ENCODE measurements at regions of chr19 and their contacts with region 1.

Region 1: DNA sequence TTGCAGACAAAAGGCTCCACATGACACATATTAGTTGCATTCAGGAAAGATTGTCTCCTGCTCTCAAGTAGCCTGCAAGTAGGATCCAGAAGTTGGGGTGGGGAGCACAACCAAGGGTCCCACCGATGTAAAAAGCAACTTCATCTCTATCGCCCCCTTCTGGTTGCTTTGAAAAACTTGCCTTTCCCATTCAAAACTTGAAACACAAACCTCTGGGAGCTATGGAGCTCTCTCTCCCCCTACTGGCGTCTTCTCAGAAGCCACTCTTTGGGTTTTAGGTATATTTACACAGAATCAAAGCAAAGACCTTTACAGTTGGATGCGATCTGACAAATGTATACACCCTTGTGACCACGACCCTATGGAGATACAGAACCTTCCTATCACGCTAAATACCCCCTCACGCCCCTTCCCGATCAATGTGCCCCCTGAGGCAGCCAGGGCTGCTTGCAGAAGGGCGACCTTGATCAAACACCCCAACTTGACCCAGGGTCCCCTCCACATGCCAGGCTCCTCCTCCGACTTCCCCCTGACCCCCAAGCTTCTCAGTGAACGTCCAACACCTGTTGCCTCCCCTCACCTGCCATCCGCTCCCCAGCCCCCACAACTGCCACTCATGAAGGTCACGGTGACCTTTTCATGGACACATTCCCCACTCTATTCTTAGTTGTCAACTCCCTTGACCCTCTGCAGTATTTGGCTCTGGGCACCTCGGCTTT is 10.1 kb downstream of the NOSIP start:
- DNase-seq: peak in 8 of 9 experiments; percentile 54 to 94 (median 74)
- ATAC-seq: peak; percentile 36
- H3K4me3 ChIP-seq: no peak overlapping the region
- H3K4me3 Mint-ChIP-seq: peak overlapping the region; percentile 68
- H3K27ac ChIP-seq: no peak overlapping the region
- H3K27ac Mint-ChIP-seq: peak overlapping the region; percentile 89
- H3K4me1 ChIP-seq: peaks cover 59% of the 10 kb centered on the region
- H3K4me1 Mint-ChIP-seq: peaks cover 49% of the 10 kb centered on the region
- H3K27me3 ChIP-seq: no peaks in the 10 kb centered on the region
- H3K27me3 Mint-ChIP-seq: no peaks in the 10 kb centered on the region
- CTCF ChIP-seq: peak; percentile 100

Region 2: GRCh38 chr19:49224856-49225255 is 345.4 kb before region 1 on chr19:
- CTCF ChIA-PET with region 1: no interaction called
- POLR2A ChIA-PET with region 1: no interaction called
- intact Hi-C with region 1: loop called in 1 of 2 experiments (anchors 1 kb)
- DNase-seq: peak in 2 of 9 experiments; percentile 26 to 28
- ATAC-seq: no peak
- H3K4me3 ChIP-seq: no peak overlapping the region
- H3K4me3 Mint-ChIP-seq: no peak overlapping the region
- H3K27ac ChIP-seq: no peak overlapping the region
- H3K27ac Mint-ChIP-seq: no peak overlapping the region
- H3K4me1 ChIP-seq: peaks cover 8% of the 10 kb centered on the region
- H3K4me1 Mint-ChIP-seq: peaks cover 4% of the 10 kb centered on the region
- H3K27me3 ChIP-seq: no peaks in the 10 kb centered on the region
- H3K27me3 Mint-ChIP-seq: peaks cover 12% of the 10 kb centered on the region
- CTCF ChIP-seq: no peak

Region 3: DNA sequence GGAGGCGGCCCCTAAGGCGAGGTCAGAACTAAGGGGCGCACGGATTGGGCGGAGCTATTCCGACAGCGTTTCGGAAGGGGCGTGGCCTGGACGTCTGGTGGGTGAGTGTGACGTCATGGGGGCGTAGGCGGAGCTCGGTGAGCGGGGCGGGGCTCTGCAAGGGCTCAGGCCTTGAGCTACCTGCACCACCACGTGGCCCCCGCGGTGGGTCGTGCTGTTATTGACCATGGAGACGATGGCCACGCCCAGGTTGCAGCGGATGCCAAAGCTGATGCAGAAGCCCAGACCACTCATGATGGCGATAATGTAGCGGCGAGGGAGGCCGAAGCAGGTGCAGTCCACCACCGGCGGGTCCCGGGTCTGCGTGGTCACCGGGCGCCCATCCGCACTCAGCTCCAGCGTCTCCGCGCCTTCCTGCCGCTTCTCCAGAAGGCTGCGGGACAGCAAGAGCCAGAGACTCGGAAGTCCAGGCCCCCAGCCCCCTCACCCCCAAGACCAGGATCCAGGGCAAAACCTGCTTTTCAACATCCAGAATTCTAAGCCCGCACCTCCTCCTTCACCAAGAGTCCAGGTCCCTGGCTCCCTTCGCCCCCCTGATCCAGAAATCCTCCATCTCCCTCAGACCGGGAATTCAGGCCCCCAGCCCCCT is 133.8 kb before region 1 on chr19:
- CTCF ChIA-PET with region 1: no interaction called
- POLR2A ChIA-PET with region 1: no interaction called
- intact Hi-C with region 1: no loop called
- DNase-seq: peak in 5 of 9 experiments; percentile 47 to 76 (median 67)
- ATAC-seq: peak; percentile 58
- H3K4me3 ChIP-seq: no peak overlapping the region
- H3K4me3 Mint-ChIP-seq: no peak overlapping the region
- H3K27ac ChIP-seq: no peak overlapping the region
- H3K27ac Mint-ChIP-seq: no peak overlapping the region
- H3K4me1 ChIP-seq: peaks cover 30% of the 10 kb centered on the region
- H3K4me1 Mint-ChIP-seq: peaks cover 32% of the 10 kb centered on the region
- H3K27me3 ChIP-seq: peaks cover 78 to 86% of the 10 kb centered on the region in 2 experiments
- H3K27me3 Mint-ChIP-seq: peaks cover 78% of the 10 kb centered on the region
- CTCF ChIP-seq: no peak

Region 4: DNA sequence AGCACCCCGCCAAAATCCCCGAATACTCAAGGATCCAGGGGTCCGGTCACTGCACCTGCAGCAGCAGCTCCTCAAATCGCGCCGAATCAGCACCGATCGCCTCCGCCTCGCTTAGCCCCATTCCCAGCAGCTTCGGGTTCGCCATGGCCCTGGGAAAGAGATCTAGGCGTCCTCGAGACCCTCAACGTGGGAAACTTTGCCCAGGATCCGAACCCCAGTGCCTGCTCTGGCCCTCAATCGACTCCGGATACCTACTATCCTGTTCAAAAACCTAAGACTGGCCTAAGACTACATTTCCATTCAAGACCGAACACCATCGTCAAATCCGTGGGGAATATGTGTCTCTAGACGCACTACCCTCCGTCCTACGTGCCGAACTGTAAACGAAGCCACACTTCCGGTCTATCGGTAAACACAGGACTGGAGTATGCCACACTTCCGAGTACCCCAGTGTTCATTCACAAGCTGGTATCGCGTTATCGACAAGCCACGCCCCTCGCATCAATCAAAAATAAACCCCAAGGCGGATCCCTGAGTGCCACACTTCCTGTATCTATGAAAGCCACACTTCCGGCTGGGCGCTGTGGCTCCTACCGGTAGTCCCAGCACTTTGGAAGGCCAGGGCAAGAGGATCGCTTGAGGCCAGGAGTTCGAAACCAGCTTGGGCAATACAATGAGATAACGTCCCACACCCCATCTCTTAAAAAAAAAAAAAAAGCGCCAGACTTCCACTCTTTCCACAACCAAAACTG is 118.7 kb before region 1 on chr19 and contains the start of gene PIH1D1:
- CTCF ChIA-PET with region 1: no interaction called
- POLR2A ChIA-PET with region 1: no interaction called
- intact Hi-C with region 1: loop called in 1 of 2 experiments (anchors 1 kb)
- DNase-seq: peak; percentile 86 to 99 (median 94)
- ATAC-seq: peak; percentile 66
- H3K4me3 ChIP-seq: peak within 1 kb of the TSS; percentile 87 to 94
- H3K4me3 Mint-ChIP-seq: peak within 1 kb of the TSS; percentile 99
- H3K27ac ChIP-seq: peak within 1 kb of the TSS; percentile 89 to 96
- H3K27ac Mint-ChIP-seq: peak within 1 kb of the TSS; percentile 99
- H3K4me1 ChIP-seq: peaks cover 31% of the 10 kb centered on the region
- H3K4me1 Mint-ChIP-seq: peaks cover 50% of the 10 kb centered on the region
- H3K27me3 ChIP-seq: no peaks in the 10 kb centered on the region
- H3K27me3 Mint-ChIP-seq: no peaks in the 10 kb centered on the region
- CTCF ChIP-seq: no peak
- total RNA-seq, gene PIH1D1: 113 to 119 TPM

Region 5: GRCh38 chr19:49502866-49503581 is 67.3 kb before region 1 on chr19:
- CTCF ChIA-PET with region 1: interaction called, 27 read pairs
- POLR2A ChIA-PET with region 1: interaction called, 8 read pairs
- intact Hi-C with region 1: loop called (anchors 1 kb)
- DNase-seq: peak in 6 of 9 experiments; percentile 43 to 80 (median 58)
- ATAC-seq: no peak
- H3K4me3 ChIP-seq: no peak overlapping the region
- H3K4me3 Mint-ChIP-seq: no peak overlapping the region
- H3K27ac ChIP-seq: peak overlapping the region in 1 of 2 experiments; percentile 98
- H3K27ac Mint-ChIP-seq: peak overlapping the region; percentile 75
- H3K4me1 ChIP-seq: peaks cover 42% of the 10 kb centered on the region
- H3K4me1 Mint-ChIP-seq: peaks cover 40% of the 10 kb centered on the region
- H3K27me3 ChIP-seq: no peaks in the 10 kb centered on the region
- H3K27me3 Mint-ChIP-seq: no peaks in the 10 kb centered on the region
- CTCF ChIP-seq: peak; percentile 67

Region 6: DNA sequence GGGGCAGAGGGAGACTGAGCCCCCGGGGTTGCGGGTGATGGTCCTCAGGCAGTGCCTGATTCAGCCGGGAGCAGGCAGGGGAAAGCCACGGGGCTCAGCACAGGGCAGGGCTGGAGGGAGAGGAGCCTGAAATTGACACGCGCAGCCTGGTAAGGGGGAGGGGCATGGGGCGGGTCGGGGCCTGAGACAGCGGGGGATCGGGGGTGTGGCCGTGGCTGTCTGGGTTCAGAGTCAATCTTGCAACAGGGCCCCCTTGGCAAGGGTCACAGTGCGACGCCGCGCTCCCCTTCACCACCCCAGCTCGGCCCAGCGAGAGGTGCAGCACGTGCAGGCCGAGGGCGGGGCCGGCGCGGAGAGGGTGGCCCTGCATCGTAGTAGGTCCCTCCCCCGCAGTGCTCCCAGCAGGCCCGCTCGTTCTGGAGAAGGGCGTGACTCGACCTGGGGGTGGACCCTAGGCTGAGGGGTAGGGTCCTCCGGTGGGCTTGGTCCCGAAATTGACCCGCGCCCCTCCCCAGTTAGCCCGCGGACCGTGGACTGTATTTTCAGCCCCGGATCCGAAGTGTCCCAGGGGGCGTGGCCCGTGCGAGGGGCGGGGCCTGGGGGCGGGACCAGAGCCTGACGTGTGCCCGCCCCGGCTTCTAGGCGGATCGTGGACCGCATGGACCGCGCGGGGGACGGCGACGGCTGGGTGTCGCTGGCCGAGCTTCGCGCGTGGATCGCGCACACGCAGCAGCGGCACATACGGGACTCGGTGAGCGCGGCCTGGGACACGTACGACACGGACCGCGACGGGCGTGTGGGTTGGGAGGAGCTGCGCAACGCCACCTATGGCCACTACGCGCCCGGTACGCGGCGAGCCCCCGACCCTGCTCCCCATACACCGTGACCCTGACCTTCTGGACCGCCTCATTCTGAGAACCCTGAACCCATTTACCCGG is 36.5 kb before region 1 on chr19:
- CTCF ChIA-PET with region 1: interaction called, 16 read pairs
- POLR2A ChIA-PET with region 1: interaction called, 3 read pairs
- intact Hi-C with region 1: loop called in 1 of 2 experiments (anchors 1 kb)
- DNase-seq: peak; percentile 72 to 92 (median 86)
- ATAC-seq: peak; percentile 91
- H3K4me3 ChIP-seq: peak overlapping the region; percentile 71 to 78
- H3K4me3 Mint-ChIP-seq: peak overlapping the region; percentile 84
- H3K27ac ChIP-seq: peak overlapping the region in 1 of 2 experiments; percentile 36
- H3K27ac Mint-ChIP-seq: peak overlapping the region; percentile 55
- H3K4me1 ChIP-seq: peaks cover 21% of the 10 kb centered on the region
- H3K4me1 Mint-ChIP-seq: peaks cover 23% of the 10 kb centered on the region
- H3K27me3 ChIP-seq: peaks cover 0 to 3% of the 10 kb centered on the region in 2 experiments
- H3K27me3 Mint-ChIP-seq: no peaks in the 10 kb centered on the region
- CTCF ChIP-seq: no peak

Region 7: DNA sequence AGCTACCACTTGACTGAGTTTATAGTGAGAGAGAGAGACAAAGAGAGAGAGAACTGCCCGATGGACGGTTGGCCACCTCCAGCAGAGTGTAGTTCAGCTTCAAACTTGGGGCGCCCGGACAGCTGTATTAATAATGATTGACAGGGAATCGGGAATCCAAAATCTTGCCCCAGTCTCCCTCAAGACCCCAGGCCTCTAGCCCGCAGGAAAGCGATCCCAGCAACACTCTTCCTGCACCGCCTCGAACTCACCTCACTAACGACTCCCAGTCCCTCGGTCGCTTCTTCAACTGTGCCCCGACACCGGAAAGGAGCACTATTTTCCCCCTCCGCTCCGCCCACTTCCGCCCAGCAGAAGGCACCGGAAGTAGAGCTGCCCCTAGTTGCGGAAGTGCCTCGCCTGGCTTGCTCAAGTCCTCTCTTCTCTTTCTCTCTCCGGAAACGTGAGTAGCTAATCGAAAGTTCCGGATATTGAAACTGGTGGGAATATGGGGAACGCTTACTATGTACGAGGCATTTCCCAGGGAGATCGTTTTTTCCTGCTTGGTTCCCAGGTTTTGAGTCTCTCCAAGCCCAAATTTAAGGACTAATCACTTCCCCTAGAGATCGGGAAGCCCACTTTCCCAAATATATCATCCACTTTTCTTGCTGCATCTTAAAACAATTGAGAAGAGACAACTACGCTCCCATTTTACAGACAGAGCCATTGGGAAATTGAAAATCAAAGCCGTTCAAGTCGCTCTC is 10.1 kb after region 1 on chr19 and contains the start of gene NOSIP:
- CTCF ChIA-PET with region 1: interaction called, 30 read pairs
- POLR2A ChIA-PET with region 1: interaction called, 8 read pairs
- intact Hi-C with region 1: no loop called
- DNase-seq: peak; percentile 93 to 98 (median 97)
- ATAC-seq: peak; percentile 97
- H3K4me3 ChIP-seq: peak within 1 kb of the TSS; percentile 68 to 71
- H3K4me3 Mint-ChIP-seq: peak within 1 kb of the TSS; percentile 95
- H3K27ac ChIP-seq: peak within 1 kb of the TSS; percentile 63 to 66
- H3K27ac Mint-ChIP-seq: peak within 1 kb of the TSS; percentile 94
- H3K4me1 ChIP-seq: peaks cover 22% of the 10 kb centered on the region
- H3K4me1 Mint-ChIP-seq: peaks cover 39% of the 10 kb centered on the region
- H3K27me3 ChIP-seq: no peaks in the 10 kb centered on the region
- H3K27me3 Mint-ChIP-seq: no peaks in the 10 kb centered on the region
- CTCF ChIP-seq: no peak
- total RNA-seq, gene NOSIP: 103 to 110 TPM

Measured in CD8-positive, alpha-beta T cell (primary cell).